ENCODE measurements at regions of chr14 and their contacts with region 1.

Region 1: DNA sequence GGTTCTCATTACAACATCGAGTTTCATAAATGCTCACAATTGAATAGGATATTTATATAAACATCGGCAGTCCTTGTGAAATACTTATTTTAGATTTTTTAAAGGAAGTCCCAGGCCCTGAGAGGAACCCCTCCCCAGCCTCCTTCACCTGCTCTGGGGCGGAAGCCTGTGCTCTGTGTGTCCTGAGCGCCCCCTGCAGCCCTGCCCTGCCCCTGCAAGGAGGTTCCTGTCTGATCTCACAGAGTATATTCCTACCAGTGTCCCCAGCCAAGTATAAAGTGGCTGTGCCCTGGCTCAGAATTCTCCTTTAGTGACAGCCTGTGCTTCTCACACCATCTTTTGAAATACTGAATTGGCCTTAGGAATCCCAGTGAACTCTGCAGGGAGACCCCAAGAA is 659.5 kb downstream of the TMEM121 start:
- DNase-seq: peak; percentile 57 to 91 (median 74)
- ATAC-seq: peak; percentile 85
- H3K4me3 ChIP-seq: no peak overlapping the region
- H3K4me3 Mint-ChIP-seq: peak overlapping the region; percentile 62
- H3K27ac ChIP-seq: no peak overlapping the region
- H3K27ac Mint-ChIP-seq: peak overlapping the region; percentile 72
- H3K4me1 ChIP-seq: peaks cover 24% of the 10 kb centered on the region
- H3K4me1 Mint-ChIP-seq: peaks cover 44% of the 10 kb centered on the region
- H3K27me3 ChIP-seq: no peaks in the 10 kb centered on the region
- H3K27me3 Mint-ChIP-seq: no peaks in the 10 kb centered on the region
- CTCF ChIP-seq: peak; percentile 84

Region 2: GRCh38 chr14:106115401-106115800 is 70.4 kb before region 1 on chr14:
- CTCF ChIA-PET with region 1: no interaction called
- POLR2A ChIA-PET with region 1: no interaction called
- intact Hi-C with region 1: loop called in 1 of 2 experiments (anchors 5 kb)
- DNase-seq: no peak
- ATAC-seq: no peak
- H3K4me3 ChIP-seq: no peak overlapping the region
- H3K4me3 Mint-ChIP-seq: peak overlapping the region; percentile 17
- H3K27ac ChIP-seq: no peak overlapping the region
- H3K27ac Mint-ChIP-seq: peak overlapping the region; percentile 34
- H3K4me1 ChIP-seq: peaks cover 26% of the 10 kb centered on the region
- H3K4me1 Mint-ChIP-seq: peaks cover 17% of the 10 kb centered on the region
- H3K27me3 ChIP-seq: peaks cover 0 to 14% of the 10 kb centered on the region in 2 experiments
- H3K27me3 Mint-ChIP-seq: peaks cover 21% of the 10 kb centered on the region
- CTCF ChIP-seq: no peak

Region 3: DNA sequence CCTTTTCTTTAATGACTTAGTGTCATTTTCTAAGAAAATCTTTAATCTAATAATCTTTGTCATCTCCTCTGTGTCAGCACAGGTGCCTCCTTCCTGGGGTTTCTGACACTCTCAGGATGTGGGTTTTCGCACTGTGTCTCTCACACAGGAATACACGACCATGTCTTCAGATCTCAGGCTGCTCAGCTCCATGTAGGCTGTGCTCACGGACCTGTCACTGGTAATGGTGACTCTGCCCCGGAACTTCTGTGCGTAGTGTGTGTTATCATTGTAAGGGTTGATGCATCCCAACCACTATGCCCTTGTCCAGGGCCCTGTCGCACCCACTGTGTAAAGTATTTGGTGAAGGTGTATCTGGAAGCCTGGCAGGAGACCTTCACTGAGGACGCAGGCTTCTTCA is 11.6 kb before region 1 on chr14:
- CTCF ChIA-PET with region 1: interaction called, 14 read pairs
- POLR2A ChIA-PET with region 1: interaction called, 4 read pairs
- intact Hi-C with region 1: loop called in 1 of 2 experiments (anchors 1 kb)
- DNase-seq: peak; percentile 42 to 92 (median 63)
- ATAC-seq: peak; percentile 71
- H3K4me3 ChIP-seq: peak overlapping the region; percentile 10
- H3K4me3 Mint-ChIP-seq: peak overlapping the region; percentile 42
- H3K27ac ChIP-seq: peak overlapping the region in 1 of 2 donors; percentile 72
- H3K27ac Mint-ChIP-seq: peak overlapping the region; percentile 93
- H3K4me1 ChIP-seq: peaks cover 41% of the 10 kb centered on the region
- H3K4me1 Mint-ChIP-seq: peaks cover 81% of the 10 kb centered on the region
- H3K27me3 ChIP-seq: no peaks in the 10 kb centered on the region
- H3K27me3 Mint-ChIP-seq: no peaks in the 10 kb centered on the region
- CTCF ChIP-seq: no peak

Measured in CD4-positive, alpha-beta T cell (primary cell).